ENCODE measurements at regions of chr1 and their contacts with region 1.

Region 1: DNA sequence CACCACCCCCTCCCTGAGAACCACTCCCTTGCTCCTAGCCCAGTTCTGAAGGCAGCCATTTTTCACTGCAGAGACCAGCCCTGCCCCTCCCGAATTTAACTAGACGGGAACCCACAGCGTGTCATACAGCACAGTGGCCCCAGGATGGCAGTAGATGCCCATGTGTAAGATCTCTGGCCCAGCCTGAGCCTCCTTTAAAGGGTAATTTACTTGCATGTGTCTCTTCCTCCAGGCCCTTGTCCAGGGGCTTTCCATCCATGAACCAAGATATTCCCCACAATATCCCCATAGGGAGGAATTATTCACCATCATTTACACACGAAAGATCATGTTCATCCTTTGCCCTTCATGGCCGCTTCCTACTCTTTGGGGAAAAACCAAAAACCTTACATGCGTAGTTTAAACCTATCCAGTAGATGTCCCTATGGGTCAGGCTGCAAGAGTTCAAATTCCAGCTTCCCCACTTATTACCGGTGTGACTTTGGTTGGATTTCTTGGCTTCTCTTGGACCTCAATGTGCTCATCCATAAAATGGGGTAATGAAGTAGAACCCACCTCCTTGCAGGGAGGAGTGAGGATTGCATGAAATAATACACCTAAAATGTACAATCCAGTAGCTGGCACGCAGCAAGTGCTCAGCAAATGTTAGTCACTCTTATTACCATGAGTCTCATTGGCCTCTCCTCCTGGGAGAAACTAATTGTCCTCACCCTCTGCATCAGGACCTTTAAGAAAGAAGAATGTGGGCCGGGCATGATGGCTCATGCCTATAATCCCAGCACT is 4.0 kb upstream of the LACTBL1 start:
- DNase-seq: peak; percentile 8 to 31
- ATAC-seq: peak in 1 of 2 donors; percentile 76
- H3K4me3 ChIP-seq: no peak overlapping the region
- H3K27ac ChIP-seq: no peak overlapping the region
- H3K4me1 ChIP-seq: no peaks in the 10 kb centered on the region
- H3K27me3 ChIP-seq: peaks cover 0 to 12% (median 10%) of the 10 kb centered on the region in 3 donors
- CTCF ChIP-seq: peak; percentile 45 to 66 (median 60)
- POLR2A ChIP-seq: no peak

Region 2: GRCh38 chr1:23088027-23088426 is 111.4 kb after region 1 on chr1:
- in situ Hi-C with region 1: no loop called
- intact Hi-C with region 1: loop called (anchors 2 kb)
- DNase-seq: no peak
- ATAC-seq: no peak
- H3K4me3 ChIP-seq: no peak overlapping the region
- H3K27ac ChIP-seq: no peak overlapping the region
- H3K4me1 ChIP-seq: no peaks in the 10 kb centered on the region
- H3K27me3 ChIP-seq: no peaks in the 10 kb centered on the region
- CTCF ChIP-seq: no peak
- POLR2A ChIP-seq: no peak

Region 3: DNA sequence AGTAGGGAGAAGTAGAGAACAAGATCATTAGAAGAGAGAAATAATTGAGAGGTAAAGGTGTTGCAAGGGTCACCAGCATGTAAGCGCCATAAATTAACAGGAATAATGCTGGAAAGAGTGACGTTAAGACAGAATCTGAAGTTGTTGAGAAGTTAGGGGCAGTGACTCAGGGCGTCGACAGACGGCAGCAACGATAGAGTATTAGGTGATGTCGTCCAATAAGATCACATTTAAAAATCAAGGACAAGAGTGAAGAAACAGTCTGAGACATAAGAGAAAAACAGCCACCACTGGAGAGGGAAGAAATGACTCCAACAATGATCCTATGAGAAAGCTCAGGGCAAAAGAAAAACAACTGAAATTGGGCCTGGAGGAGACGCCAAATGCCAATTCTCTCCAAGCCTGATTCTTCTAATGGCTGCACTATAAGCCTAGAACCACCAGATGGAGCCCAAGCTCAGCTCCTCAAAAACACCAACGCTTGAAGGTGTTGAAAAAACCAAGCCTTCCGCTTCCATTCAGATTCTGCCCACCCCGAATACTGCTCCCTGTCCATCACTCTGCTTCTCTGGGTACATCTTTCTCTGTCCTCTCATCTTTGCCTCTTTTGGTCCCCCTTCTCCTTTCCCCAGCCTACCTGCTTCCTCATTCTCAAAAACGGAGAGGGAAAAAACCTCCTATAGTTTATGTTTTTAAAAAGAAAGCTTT is 122.0 kb after region 1 on chr1:
- in situ Hi-C with region 1: no loop called
- intact Hi-C with region 1: loop called (anchors 2 kb)
- DNase-seq: peak; percentile 25 to 46
- ATAC-seq: peak; percentile 75 to 78
- H3K4me3 ChIP-seq: no peak overlapping the region
- H3K27ac ChIP-seq: no peak overlapping the region
- H3K4me1 ChIP-seq: peaks cover 17 to 34% of the 10 kb centered on the region in 2 donors
- H3K27me3 ChIP-seq: no peaks in the 10 kb centered on the region
- CTCF ChIP-seq: peak; percentile 73 to 96 (median 89)
- POLR2A ChIP-seq: no peak

Region 4: GRCh38 chr1:23184212-23184934 is 207.7 kb after region 1 on chr1:
- in situ Hi-C with region 1: loop called (anchors 5 to 10 kb)
- intact Hi-C with region 1: loop called (anchors 2 kb)
- DNase-seq: no peak
- ATAC-seq: no peak
- H3K4me3 ChIP-seq: peak overlapping the region; percentile 33 to 45 (median 40)
- H3K27ac ChIP-seq: no peak overlapping the region
- H3K4me1 ChIP-seq: peaks cover 0 to 3% of the 10 kb centered on the region in 2 donors
- H3K27me3 ChIP-seq: no peaks in the 10 kb centered on the region
- CTCF ChIP-seq: peak; percentile 79 to 92 (median 82)
- POLR2A ChIP-seq: no peak

Measured in gastrocnemius medialis (tissue), 4 donors.